CD4-positive, alpha-beta T cell (primary cell): ENCODE measurements at regions of chr20 and their contacts with region 1.

Region 1: DNA sequence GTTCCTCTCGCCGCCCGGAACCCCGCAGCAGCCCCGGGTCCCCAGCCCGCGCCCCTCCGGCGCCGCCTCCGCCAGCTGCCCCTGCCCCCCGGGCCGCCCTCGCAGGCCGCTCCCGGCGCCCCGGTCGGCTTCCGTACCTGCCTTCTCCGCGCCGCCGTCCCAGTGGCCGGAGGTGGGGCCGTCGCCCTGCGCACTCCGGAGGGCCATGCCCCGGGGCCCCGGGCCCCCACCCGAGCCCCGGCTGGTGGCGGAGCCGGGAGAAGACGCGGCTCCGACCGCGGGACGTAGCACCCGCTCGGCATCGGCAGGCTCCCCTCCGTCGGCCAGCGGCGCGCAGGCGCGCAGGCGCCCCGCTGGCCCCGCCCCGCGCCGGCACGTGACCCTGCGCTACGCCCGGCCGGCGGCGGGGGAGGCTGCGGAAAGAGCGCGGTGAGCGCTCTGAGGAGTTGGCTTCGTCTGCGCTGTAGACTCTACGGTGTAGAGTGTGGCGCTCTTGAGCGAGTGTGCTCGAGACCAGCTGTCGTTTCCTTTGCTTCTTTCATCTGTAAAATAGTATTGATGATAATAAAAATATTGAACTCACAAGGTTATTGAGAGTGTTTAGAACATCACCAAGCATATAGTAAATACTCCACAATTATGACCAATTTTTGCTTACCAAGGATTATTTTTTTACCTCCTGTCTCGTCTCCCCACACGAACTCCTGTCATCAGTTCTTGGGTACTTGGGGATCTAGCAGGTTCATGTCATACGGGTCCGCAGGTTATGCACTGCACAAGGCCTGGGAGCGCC is at the start of gene TBC1D20:
- DNase-seq: peak; percentile 72 to 95 (median 85)
- ATAC-seq: peak; percentile 97
- H3K4me3 ChIP-seq: peak within 1 kb of the TSS; percentile 90
- H3K4me3 Mint-ChIP-seq: peak within 1 kb of the TSS; percentile 98
- H3K27ac ChIP-seq: peak within 1 kb of the TSS; percentile 59 to 67
- H3K27ac Mint-ChIP-seq: peak within 1 kb of the TSS; percentile 90
- H3K4me1 ChIP-seq: peaks cover 34% of the 10 kb centered on the region
- H3K4me1 Mint-ChIP-seq: peaks cover 53% of the 10 kb centered on the region
- H3K27me3 ChIP-seq: no peaks in the 10 kb centered on the region
- H3K27me3 Mint-ChIP-seq: no peaks in the 10 kb centered on the region
- CTCF ChIP-seq: peak; percentile 20
- total RNA-seq, gene TBC1D20: 15.7 to 16.1 TPM

Region 2: GRCh38 chr20:381581-382290 is 80.7 kb before region 1 on chr20:
- CTCF ChIA-PET with region 1: interaction called, 4 read pairs
- POLR2A ChIA-PET with region 1: interaction called, 15 read pairs
- intact Hi-C with region 1: loop called in 1 of 2 experiments (anchors 2 kb)
- DNase-seq: peak; percentile 41 to 87 (median 67)
- ATAC-seq: peak; percentile 70
- H3K4me3 ChIP-seq: peak overlapping the region; percentile 71
- H3K4me3 Mint-ChIP-seq: peak overlapping the region; percentile 86
- H3K27ac ChIP-seq: peak overlapping the region; percentile 2 to 46
- H3K27ac Mint-ChIP-seq: peak overlapping the region; percentile 75
- H3K4me1 ChIP-seq: peaks cover 17% of the 10 kb centered on the region
- H3K4me1 Mint-ChIP-seq: peaks cover 16% of the 10 kb centered on the region
- H3K27me3 ChIP-seq: no peaks in the 10 kb centered on the region
- H3K27me3 Mint-ChIP-seq: no peaks in the 10 kb centered on the region
- CTCF ChIP-seq: no peak

Region 3: DNA sequence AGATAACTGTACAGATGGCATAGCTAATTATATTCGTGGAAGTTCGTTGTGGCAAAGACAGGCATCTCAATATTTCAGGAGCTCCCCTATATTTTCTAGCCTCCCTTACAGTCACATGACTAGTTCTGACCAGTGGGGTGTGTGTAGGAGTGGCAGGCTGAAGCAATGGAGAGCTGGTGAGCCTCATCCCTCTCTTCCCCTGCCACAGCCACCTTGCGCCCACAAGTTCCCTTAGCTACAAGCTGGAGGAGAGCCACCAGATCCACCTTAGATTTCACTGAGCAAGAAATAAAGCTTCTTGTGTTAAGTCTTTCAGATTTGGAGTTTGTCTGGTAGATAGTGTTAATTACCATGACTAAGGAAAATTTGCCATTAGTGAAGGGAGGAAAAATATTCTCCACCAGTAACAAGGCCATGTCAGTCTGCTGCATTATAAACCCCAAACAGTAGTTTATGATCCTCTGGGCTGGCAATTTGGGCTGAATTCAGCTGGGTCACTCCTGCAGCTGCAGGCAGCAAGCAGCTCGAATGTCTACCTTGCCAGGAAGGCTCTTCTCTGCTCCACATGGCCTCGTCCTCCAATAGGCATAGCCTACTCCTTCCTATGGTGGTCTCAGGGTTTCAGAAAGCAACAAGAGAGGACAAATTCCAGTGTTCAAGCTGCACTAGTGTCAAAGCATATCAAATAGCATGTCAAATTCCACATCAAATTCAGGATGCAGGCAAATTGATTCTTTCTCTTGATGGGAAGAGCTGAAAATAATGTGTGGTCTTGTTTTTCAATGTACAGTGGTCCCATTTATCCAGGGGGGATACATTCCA is 61.7 kb before region 1 on chr20:
- CTCF ChIA-PET with region 1: no interaction called
- POLR2A ChIA-PET with region 1: no interaction called
- intact Hi-C with region 1: no loop called
- DNase-seq: no peak
- ATAC-seq: no peak
- H3K4me3 ChIP-seq: no peak overlapping the region
- H3K4me3 Mint-ChIP-seq: no peak overlapping the region
- H3K27ac ChIP-seq: no peak overlapping the region
- H3K27ac Mint-ChIP-seq: no peak overlapping the region
- H3K4me1 ChIP-seq: peaks cover 14% of the 10 kb centered on the region
- H3K4me1 Mint-ChIP-seq: peaks cover 18% of the 10 kb centered on the region
- H3K27me3 ChIP-seq: no peaks in the 10 kb centered on the region
- H3K27me3 Mint-ChIP-seq: no peaks in the 10 kb centered on the region
- CTCF ChIP-seq: no peak

Region 4: DNA sequence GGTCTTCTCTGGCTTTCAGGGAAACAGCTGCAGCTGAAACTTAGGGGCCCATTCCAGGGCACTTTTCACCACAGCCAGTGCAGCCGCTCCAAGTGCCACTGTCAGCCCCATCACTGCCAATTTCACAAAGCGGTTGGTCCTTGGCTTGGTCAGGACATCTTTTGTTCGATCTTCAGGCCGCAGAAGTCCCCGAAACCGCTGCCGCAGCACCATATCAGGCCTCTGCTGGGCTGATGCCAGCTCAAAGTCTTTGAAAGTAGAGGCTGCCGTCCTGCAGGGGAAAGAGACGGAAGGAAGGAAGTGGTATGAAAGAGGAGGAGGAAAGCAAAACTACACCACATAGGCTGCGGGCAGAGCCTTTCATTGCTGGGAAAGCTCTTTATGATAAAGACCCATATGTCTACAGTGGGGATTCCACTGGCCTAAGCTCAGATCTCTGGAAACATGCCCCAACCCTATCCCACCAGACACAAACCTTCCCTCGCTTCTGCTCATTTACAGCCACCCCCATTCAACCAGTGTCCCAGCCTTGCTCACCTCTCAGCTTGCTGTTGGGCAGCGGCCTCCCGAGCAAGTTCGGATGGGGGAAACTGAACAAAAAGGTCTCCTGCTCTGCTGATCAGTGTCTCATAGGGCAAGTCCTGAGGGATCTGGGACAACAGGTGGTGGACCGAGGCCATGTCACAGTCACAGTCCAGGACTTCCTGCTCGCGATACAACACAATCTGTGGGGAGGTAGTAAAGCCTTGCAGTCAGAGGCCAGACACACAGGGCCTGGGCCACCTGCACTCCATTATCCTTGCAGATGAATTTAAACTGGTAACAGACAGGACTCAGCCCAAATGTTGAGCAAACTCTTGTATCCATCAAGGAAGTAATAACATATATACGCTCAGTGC is 23.6 kb before region 1 on chr20:
- CTCF ChIA-PET with region 1: interaction called, 8 read pairs
- POLR2A ChIA-PET with region 1: interaction called, 31 read pairs
- intact Hi-C with region 1: loop called in 1 of 2 experiments (anchors 1 kb)
- DNase-seq: peak; percentile 28 to 86 (median 54)
- ATAC-seq: peak; percentile 85
- H3K4me3 ChIP-seq: peak overlapping the region; percentile 37
- H3K4me3 Mint-ChIP-seq: peak overlapping the region; percentile 71
- H3K27ac ChIP-seq: no peak overlapping the region
- H3K27ac Mint-ChIP-seq: peak overlapping the region; percentile 49
- H3K4me1 ChIP-seq: peaks cover 51% of the 10 kb centered on the region
- H3K4me1 Mint-ChIP-seq: peaks cover 56% of the 10 kb centered on the region
- H3K27me3 ChIP-seq: no peaks in the 10 kb centered on the region
- H3K27me3 Mint-ChIP-seq: no peaks in the 10 kb centered on the region
- CTCF ChIP-seq: no peak

Region 5: GRCh38 chr20:543369-544152 is 81.2 kb after region 1 on chr20 and contains the start of gene CSNK2A1:
- CTCF ChIA-PET with region 1: no interaction called
- POLR2A ChIA-PET with region 1: interaction called, 4 read pairs
- intact Hi-C with region 1: loop called (anchors 2 to 5 kb)
- DNase-seq: peak; percentile 91 to 98 (median 96)
- ATAC-seq: peak; percentile 91
- H3K4me3 ChIP-seq: peak within 1 kb of the TSS; percentile 88
- H3K4me3 Mint-ChIP-seq: peak within 1 kb of the TSS; percentile 100
- H3K27ac ChIP-seq: peak within 1 kb of the TSS; percentile 83 to 98
- H3K27ac Mint-ChIP-seq: peak within 1 kb of the TSS; percentile 99
- H3K4me1 ChIP-seq: peaks cover 32% of the 10 kb centered on the region
- H3K4me1 Mint-ChIP-seq: peaks cover 54% of the 10 kb centered on the region
- H3K27me3 ChIP-seq: no peaks in the 10 kb centered on the region
- H3K27me3 Mint-ChIP-seq: peaks cover 12% of the 10 kb centered on the region
- CTCF ChIP-seq: no peak
- total RNA-seq, gene CSNK2A1: 55.5 to 56.9 TPM

Region 6: DNA sequence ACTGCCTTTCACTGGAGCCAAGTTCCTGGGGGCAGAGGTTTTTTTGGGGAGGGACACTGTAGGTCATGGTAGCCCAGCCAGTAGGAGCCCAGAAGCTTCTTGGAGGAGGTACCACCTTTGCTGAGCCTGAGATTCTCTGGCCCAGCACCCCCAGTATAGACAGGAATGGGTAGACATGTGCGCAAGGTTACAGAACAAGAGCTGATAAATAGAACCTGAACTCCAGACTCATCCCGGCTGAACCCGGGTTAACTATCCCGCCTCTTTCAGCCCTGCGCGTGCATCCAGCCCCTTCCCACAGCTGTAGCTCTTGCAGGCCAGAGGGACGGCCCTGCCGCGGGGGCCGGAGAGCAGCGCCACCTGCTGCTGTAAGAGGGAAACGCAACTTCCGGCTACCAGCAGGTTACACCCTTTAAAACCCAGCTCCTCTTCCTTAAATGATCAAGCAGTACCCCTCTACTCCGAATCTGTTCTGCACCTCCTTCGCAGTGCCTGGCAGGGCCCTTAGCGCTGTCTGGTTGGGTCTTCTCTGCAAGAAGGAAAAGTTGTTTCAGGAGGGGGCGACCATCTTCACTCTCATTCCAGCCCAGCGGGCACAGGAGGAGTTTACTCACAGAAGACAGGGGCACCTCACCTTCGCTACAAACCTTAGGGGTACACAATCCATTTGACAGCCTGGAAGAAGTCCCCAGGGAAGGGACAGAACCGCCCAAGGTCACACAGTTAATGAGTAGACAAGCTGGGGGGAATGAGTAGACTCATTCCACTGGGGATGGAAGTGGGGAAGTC is 183.1 kb after region 1 on chr20:
- CTCF ChIA-PET with region 1: no interaction called
- POLR2A ChIA-PET with region 1: no interaction called
- intact Hi-C with region 1: no loop called
- DNase-seq: peak; percentile 28 to 80 (median 52)
- ATAC-seq: peak; percentile 69
- H3K4me3 ChIP-seq: no peak overlapping the region
- H3K4me3 Mint-ChIP-seq: no peak overlapping the region
- H3K27ac ChIP-seq: no peak overlapping the region
- H3K27ac Mint-ChIP-seq: no peak overlapping the region
- H3K4me1 ChIP-seq: peaks cover 17% of the 10 kb centered on the region
- H3K4me1 Mint-ChIP-seq: peaks cover 22% of the 10 kb centered on the region
- H3K27me3 ChIP-seq: peaks cover 12 to 14% of the 10 kb centered on the region in 2 experiments
- H3K27me3 Mint-ChIP-seq: peaks cover 21% of the 10 kb centered on the region
- CTCF ChIP-seq: peak; percentile 95

Region 7: GRCh38 chr20:844473-845225 is 382.3 kb after region 1 on chr20:
- CTCF ChIA-PET with region 1: no interaction called
- POLR2A ChIA-PET with region 1: no interaction called
- intact Hi-C with region 1: no loop called
- DNase-seq: peak; percentile 82 to 96 (median 91)
- ATAC-seq: peak; percentile 97
- H3K4me3 ChIP-seq: peak overlapping the region; percentile 74
- H3K4me3 Mint-ChIP-seq: peak overlapping the region; percentile 89
- H3K27ac ChIP-seq: peak overlapping the region in 1 of 2 donors; percentile 64
- H3K27ac Mint-ChIP-seq: peak overlapping the region; percentile 89
- H3K4me1 ChIP-seq: peaks cover 84% of the 10 kb centered on the region
- H3K4me1 Mint-ChIP-seq: peaks cover 60% of the 10 kb centered on the region
- H3K27me3 ChIP-seq: peaks cover 0 to 4% of the 10 kb centered on the region in 2 experiments
- H3K27me3 Mint-ChIP-seq: no peaks in the 10 kb centered on the region
- CTCF ChIP-seq: no peak